MCF 10A (cell line): ENCODE measurements at regions of chr17 and their contacts with region 1.

Region 1: GRCh38 chr17:37373530-37374159 is 2.1 kb upstream of the C17orf78 start:
- DNase-seq: peak; percentile 93
- H3K4me3 Mint-ChIP-seq: no peak overlapping the region
- H3K27ac Mint-ChIP-seq: no peak overlapping the region
- H3K4me1 Mint-ChIP-seq: peaks cover 8% of the 10 kb centered on the region
- H3K27me3 Mint-ChIP-seq: no peaks in the 10 kb centered on the region
- CTCF ChIP-seq: peak; percentile 99

Region 2: DNA sequence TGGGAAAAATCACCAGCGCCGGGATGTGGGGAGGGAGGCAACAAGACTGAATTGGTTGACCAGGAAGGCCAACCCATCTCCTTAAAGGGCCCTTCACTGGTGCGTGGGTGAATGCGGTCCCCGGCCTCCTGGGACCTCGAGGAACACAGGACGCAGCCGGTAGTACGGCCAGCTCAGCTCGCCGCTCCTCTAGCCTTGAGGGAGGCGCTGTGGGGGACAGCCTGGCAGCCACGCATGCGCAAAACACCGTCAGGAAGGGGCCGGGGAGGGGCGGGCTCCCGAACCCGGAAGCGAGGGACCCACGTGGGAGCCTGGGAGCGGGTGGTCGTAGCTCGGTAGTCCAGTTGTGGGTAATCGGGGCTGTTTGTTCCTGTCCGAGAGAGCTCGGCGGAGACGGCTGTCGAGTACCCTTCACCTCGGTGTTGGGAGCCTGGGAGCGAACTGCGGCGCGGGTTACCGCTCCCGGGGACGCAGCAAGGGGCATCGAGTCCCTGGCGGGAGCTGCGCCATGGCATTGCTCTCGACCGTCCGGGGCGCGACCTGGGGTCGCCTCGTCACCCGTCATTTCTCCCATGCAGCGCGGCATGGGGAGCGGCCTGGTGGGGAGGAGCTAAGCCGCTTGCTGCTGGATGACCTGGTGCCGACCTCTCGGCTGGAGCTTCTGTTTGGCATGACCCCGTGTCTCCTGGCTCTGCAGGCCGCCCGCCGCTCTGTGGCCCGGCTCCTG is 772.2 kb before region 1 on chr17 and contains the start of gene MRM1:
- CTCF ChIA-PET with region 1: interaction called, 4 read pairs
- POLR2A ChIA-PET with region 1: no interaction called
- intact Hi-C with region 1: loop called (anchors 10 kb)
- DNase-seq: peak; percentile 92
- H3K4me3 Mint-ChIP-seq: peak within 1 kb of the TSS; percentile 93
- H3K27ac Mint-ChIP-seq: peak within 1 kb of the TSS; percentile 85
- H3K4me1 Mint-ChIP-seq: peaks cover 24% of the 10 kb centered on the region
- H3K27me3 Mint-ChIP-seq: no peaks in the 10 kb centered on the region
- CTCF ChIP-seq: no peak
- total RNA-seq, gene MRM1: 5.7 and 10.0 TPM in 2 replicates

Region 3: DNA sequence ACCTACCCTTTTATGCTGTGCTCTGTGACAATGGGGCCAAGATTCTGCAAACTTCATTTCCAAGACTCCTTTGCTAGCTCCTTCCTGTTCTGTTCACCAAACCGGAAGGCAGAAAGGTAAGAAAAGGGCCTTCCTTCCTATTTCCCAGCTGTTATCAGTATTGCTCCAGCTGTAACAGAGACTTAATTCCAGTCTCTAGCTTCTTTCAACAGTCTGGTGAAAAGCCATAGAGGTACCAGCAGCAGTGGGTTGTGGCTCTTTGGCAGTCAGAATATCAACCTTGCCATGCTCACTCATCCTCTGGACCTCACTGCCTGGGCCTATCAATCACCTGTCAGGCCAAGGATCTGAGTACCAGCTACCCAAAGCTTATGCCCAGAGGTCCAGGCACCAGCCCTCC is 87.2 kb before region 1 on chr17:
- CTCF ChIA-PET with region 1: interaction called, 11 read pairs
- POLR2A ChIA-PET with region 1: no interaction called
- intact Hi-C with region 1: no loop called
- DNase-seq: no peak
- H3K4me3 Mint-ChIP-seq: no peak overlapping the region
- H3K27ac Mint-ChIP-seq: peak overlapping the region; percentile 42
- H3K4me1 Mint-ChIP-seq: no peaks in the 10 kb centered on the region
- H3K27me3 Mint-ChIP-seq: no peaks in the 10 kb centered on the region
- CTCF ChIP-seq: no peak

Region 4: GRCh38 chr17:37392024-37392590 is 18.5 kb after region 1 on chr17:
- CTCF ChIA-PET with region 1: interaction called, 31 read pairs
- POLR2A ChIA-PET with region 1: interaction called, 6 read pairs
- intact Hi-C with region 1: loop called (anchors 1 kb)
- DNase-seq: peak; percentile 54
- H3K4me3 Mint-ChIP-seq: peak overlapping the region; percentile 35
- H3K27ac Mint-ChIP-seq: peak overlapping the region; percentile 68
- H3K4me1 Mint-ChIP-seq: peaks cover 14% of the 10 kb centered on the region
- H3K27me3 Mint-ChIP-seq: no peaks in the 10 kb centered on the region
- CTCF ChIP-seq: no peak

Region 5: GRCh38 chr17:37489197-37490001 is 115.8 kb after region 1 on chr17 and contains the start of gene DUSP14:
- CTCF ChIA-PET with region 1: interaction called, 11 read pairs
- POLR2A ChIA-PET with region 1: interaction called, 4 read pairs
- intact Hi-C with region 1: no loop called
- DNase-seq: peak; percentile 80
- H3K4me3 Mint-ChIP-seq: peak within 1 kb of the TSS; percentile 92
- H3K27ac Mint-ChIP-seq: peak within 1 kb of the TSS; percentile 79
- H3K4me1 Mint-ChIP-seq: peaks cover 33% of the 10 kb centered on the region
- H3K27me3 Mint-ChIP-seq: no peaks in the 10 kb centered on the region
- CTCF ChIP-seq: no peak
- total RNA-seq, gene DUSP14: 31.7 and 39.4 TPM in 2 replicates

Region 6: DNA sequence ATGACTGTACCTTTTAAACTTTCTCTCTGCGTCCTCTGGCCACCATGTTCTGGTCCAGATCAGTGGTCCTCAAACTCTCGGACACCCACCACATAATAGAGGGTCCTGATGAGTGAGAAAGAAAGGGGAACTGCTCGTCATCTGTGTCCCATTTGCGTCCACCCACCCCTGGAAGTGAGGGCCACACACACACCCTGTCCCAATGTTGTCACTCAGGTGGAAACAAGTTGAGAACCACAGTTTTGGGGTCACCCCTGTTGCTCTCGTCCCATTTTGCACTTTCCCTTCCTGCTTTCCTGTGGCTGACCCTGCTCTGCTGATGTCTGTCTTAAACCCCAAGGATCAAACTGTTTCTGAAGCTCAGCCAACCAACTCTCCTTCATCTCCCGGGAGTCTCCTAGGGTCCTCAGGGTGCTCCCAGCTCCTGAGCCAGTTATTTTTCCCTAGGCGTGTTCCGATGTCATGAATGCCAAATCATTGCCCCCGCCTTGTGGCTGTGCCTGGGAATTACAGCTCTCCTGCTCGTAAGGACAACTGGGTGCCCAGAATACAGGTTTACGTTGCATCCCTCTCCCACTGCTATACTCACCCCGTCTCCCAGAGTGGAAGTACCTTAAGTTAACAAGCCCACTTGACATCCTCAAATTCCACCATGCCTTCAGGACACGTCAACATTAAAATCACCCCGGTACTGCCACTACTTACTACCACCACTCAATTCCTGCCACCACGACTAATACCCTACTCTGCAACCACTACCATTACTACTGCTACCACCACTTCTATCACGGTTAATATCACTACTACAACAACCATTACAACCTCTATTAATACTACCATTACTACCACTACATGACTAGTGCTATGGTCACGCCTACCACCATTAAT is 397.2 kb after region 1 on chr17:
- CTCF ChIA-PET with region 1: interaction called, 3 read pairs
- POLR2A ChIA-PET with region 1: no interaction called
- intact Hi-C with region 1: loop called (anchors 2 kb)
- DNase-seq: peak; percentile 75
- H3K4me3 Mint-ChIP-seq: no peak overlapping the region
- H3K27ac Mint-ChIP-seq: no peak overlapping the region
- H3K4me1 Mint-ChIP-seq: peaks cover 18% of the 10 kb centered on the region
- H3K27me3 Mint-ChIP-seq: no peaks in the 10 kb centered on the region
- CTCF ChIP-seq: peak; percentile 87